ENCODE measurements at regions of chr14 and their contacts with region 1.

Region 1: GRCh38 chr14:58637391-58638230 is at the start of gene DACT1:
- DNase-seq: peak; percentile 72 to 84 (median 80)
- ATAC-seq: peak; percentile 12 to 84 (median 75)
- H3K4me3 ChIP-seq: peak within 1 kb of the TSS; percentile 46 to 90 (median 77)
- H3K27ac ChIP-seq: peak within 1 kb of the TSS; percentile 10 to 92 (median 82)
- H3K4me1 ChIP-seq: peaks cover 0 to 36% (median 25%) of the 10 kb centered on the region in 12 donors
- H3K27me3 ChIP-seq: peaks cover 0 to 24% (median 0%) of the 10 kb centered on the region in 9 donors
- CTCF ChIP-seq: peak in 3 of 12 donors; percentile 4 to 6 (median 4)
- POLR2A ChIP-seq: no peak
- total RNA-seq, gene DACT1: 1.3 to 7.2 (median 3.1) TPM

Region 2: GRCh38 chr14:58598028-58598803 is 39.4 kb before region 1 on chr14:
- intact Hi-C with region 1: loop called in 1 of 10 experiments (anchors 2 kb)
- DNase-seq: no peak
- ATAC-seq: no peak
- H3K4me3 ChIP-seq: no peak overlapping the region
- H3K27ac ChIP-seq: no peak overlapping the region
- H3K4me1 ChIP-seq: no peaks in the 10 kb centered on the region
- H3K27me3 ChIP-seq: no peaks in the 10 kb centered on the region
- CTCF ChIP-seq: no peak
- POLR2A ChIP-seq: no peak

Region 3: DNA sequence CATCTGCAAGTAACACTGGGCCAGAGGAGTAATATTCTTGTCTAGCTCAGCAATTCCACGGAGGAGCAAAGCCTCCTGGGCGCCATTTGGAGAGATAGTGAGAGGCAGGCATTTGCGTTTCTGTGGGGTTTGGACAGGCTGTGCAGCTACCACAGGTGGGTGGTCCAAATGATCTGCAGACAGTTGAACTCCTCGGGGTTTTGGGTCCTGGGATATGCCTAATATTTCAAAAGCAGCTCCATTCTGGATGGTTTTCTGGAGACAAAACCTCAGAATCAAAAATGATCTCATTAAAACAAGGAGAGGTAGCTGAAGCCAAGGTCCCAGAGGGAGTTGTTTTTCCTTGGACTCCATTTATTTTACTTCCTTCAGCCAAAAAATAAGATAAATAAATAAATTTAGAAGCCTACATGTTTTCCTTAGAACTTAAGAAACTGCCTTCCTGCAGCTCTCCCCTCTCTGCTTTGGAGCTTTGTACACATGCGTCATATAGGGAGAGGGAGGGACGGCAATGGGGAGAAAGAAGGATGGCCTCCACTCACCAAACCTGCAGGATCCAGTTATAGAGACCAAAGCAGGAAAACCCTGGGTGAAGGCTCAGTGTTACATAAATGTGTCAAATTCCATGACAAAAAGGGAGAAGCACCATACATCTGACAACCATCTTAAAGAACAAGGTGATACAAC is 323.6 kb after region 1 on chr14:
- intact Hi-C with region 1: loop called in 1 of 10 experiments (anchors 5 kb)
- DNase-seq: peak in 3 of 5 donors; percentile 35 to 49 (median 41)
- ATAC-seq: peak in 1 of 4 donors; percentile 24
- H3K4me3 ChIP-seq: no peak overlapping the region
- H3K27ac ChIP-seq: peak overlapping the region in 1 of 12 donors; percentile 27
- H3K4me1 ChIP-seq: peaks cover 0 to 7% (median 0%) of the 10 kb centered on the region in 12 donors
- H3K27me3 ChIP-seq: no peaks in the 10 kb centered on the region
- CTCF ChIP-seq: no peak
- POLR2A ChIP-seq: no peak

Region 4: GRCh38 chr14:59020382-59020781 is 382.8 kb after region 1 on chr14:
- intact Hi-C with region 1: loop called in 9 of 10 experiments (anchors 2 to 10 kb)
- DNase-seq: no peak
- ATAC-seq: no peak
- H3K4me3 ChIP-seq: no peak overlapping the region
- H3K27ac ChIP-seq: no peak overlapping the region
- H3K4me1 ChIP-seq: no peaks in the 10 kb centered on the region
- H3K27me3 ChIP-seq: no peaks in the 10 kb centered on the region
- CTCF ChIP-seq: peak in 10 of 12 donors; percentile 9 to 49 (median 33)
- POLR2A ChIP-seq: no peak

Region 5: DNA sequence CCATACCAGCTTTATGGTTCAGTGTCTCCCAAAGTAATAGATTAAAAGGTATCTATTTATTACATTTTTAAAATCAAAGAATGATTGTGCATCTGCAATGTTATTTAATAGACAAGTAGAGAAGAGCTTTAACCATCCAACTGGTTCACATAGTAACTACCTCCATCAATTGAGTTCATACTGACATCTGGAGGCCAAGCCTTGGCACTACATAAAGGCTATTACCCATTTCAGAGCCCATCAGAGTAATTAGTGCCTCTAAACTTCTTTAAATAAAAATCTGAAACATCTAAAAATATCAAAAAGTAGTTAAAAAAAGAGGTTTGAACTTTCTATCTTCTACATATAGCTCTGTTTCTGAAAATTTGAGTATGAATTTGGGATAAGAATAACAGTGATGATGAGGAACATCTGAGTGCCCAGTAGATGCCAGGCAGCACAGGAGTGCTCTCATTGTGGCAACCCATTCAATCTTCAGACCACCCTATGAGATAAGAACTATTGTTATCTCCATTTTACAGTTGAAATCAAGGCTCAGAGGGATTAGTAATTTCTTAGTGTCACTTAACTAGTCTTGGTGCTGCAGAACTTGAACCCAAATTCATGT is 417.9 kb after region 1 on chr14:
- intact Hi-C with region 1: loop called in 6 of 10 experiments (anchors 2 to 10 kb)
- DNase-seq: peak in 1 of 5 donors; percentile 12
- ATAC-seq: peak in 3 of 4 donors; percentile 55 to 70 (median 58)
- H3K4me3 ChIP-seq: no peak overlapping the region
- H3K27ac ChIP-seq: no peak overlapping the region
- H3K4me1 ChIP-seq: no peaks in the 10 kb centered on the region
- H3K27me3 ChIP-seq: peaks cover 0 to 5% (median 0%) of the 10 kb centered on the region in 9 donors
- CTCF ChIP-seq: peak; percentile 49 to 84 (median 70)
- POLR2A ChIP-seq: no peak